ENCODE measurements at regions of chr13 and their contacts with region 1.

Region 1: DNA sequence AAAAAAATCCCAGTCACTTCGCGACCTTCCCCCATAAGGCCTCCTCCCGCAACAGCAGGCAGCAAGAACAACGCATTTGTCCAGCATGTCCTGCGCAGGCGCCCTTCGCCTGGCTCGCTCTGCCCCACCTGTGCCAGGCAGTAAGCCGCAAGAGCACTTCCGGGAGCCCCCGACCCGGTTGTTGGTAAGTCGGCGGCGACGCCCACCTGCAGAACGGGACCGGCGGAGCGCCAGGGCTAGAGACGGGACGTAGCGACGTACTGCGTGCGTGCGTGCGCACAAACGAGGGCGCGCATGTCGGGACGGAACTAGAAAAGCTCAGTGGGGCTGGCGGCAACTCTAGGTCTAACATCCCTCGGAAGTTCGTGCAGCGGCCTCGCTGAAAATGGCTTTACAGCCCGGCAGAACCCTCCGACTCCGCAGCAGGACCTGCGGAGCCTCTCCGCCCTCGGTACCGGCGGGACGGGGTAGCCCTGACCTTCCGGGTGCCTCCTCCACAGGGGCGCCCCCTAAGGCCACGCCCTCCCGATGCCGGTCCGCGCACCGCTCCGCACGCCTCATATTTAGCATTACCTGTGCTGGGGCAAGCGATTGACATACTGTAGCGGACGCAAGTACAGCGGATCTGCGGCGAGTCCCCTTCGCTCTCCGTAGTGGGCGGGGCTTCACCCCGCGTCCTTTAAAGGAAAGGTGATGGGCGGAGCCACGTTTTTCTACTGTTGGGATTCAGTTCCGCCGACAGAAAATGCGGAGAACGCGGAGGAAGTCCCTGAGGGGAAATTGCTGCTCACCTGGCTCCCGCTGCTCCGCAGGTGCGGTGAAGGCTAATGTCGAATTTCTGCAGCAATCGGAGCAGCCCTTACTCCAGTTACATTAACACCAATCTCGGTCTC is at the start of gene MTIF3:
- DNase-seq: peak; percentile 95 to 96
- ATAC-seq: peak; percentile 96
- H3K4me3 ChIP-seq: peak within 1 kb of the TSS; percentile 82 to 88
- H3K27ac ChIP-seq: peak within 1 kb of the TSS; percentile 33 to 88
- H3K4me1 ChIP-seq: peaks cover 0 to 3% of the 10 kb centered on the region in 2 donors
- H3K27me3 ChIP-seq: no peaks in the 10 kb centered on the region
- total RNA-seq, gene MTIF3: 26.8 to 43.8 TPM

Region 2: GRCh38 chr13:27374650-27375049 is 75.5 kb before region 1 on chr13:
- intact Hi-C with region 1: no loop called
- DNase-seq: peak; percentile 73 to 77
- ATAC-seq: peak; percentile 91
- H3K4me3 ChIP-seq: no peak overlapping the region
- H3K27ac ChIP-seq: no peak overlapping the region
- H3K4me1 ChIP-seq: no peaks in the 10 kb centered on the region
- H3K27me3 ChIP-seq: no peaks in the 10 kb centered on the region

Region 3: GRCh38 chr13:27424246-27425157 is 25.7 kb before region 1 on chr13 and contains the start of gene GTF3A:
- intact Hi-C with region 1: loop called in 1 of 2 experiments (anchors 2 kb)
- DNase-seq: peak; percentile 87 to 93
- ATAC-seq: peak; percentile 97
- H3K4me3 ChIP-seq: peak within 1 kb of the TSS; percentile 71 to 87
- H3K27ac ChIP-seq: peak within 1 kb of the TSS in 1 of 2 donors; percentile 55
- H3K4me1 ChIP-seq: peaks cover 2 to 3% of the 10 kb centered on the region in 2 donors
- H3K27me3 ChIP-seq: no peaks in the 10 kb centered on the region
- total RNA-seq, gene GTF3A: 62.1 to 68.5 TPM

Region 4: DNA sequence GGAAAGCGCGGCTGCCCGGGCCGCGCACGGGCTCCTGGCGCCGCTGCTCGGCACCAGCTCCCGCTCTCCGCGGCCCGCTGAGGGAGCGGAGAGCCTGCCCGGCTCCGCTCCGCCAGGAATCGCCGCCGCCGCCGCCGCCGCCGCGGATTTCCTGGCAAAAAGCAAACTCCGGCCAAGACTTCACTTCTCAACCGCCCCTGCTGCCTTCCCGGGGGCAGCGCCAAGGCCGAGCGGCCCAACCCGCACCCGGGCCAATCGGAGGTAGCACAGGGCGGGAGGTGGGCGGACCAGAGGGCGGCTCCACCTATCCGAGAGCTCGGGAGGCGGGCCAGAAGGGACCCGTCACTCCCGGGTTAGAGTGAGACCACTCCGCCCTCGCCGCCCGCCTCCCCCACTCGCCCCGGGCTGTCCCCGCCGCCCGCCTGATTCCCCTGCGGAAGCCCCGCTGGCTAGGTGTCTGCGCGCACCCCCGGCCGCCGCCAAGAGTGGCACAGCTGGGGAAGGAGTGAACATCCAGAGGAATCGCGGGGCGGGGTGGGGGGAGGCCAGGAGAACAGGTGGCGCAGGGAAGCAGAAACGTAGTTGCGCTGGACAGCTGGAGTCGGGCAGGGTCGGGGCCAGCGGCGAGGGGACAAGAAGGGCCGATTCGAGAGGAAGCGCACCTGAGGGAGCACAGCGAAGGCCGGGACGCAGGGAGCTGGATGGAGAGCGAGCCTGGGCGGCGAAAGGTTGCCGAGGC is 170.4 kb after region 1 on chr13 and contains the start of gene LNX2:
- intact Hi-C with region 1: loop called in 1 of 2 experiments (anchors 2 kb)
- DNase-seq: peak; percentile 99
- ATAC-seq: peak; percentile 98
- H3K4me3 ChIP-seq: peak within 1 kb of the TSS; percentile 82 to 99
- H3K27ac ChIP-seq: peak within 1 kb of the TSS; percentile 43 to 99
- H3K4me1 ChIP-seq: peaks cover 0 to 4% of the 10 kb centered on the region in 2 donors
- H3K27me3 ChIP-seq: no peaks in the 10 kb centered on the region
- total RNA-seq, gene LNX2: 9.5 to 10.3 TPM

Region 5: GRCh38 chr13:27638521-27638920 is 188.3 kb after region 1 on chr13:
- intact Hi-C with region 1: loop called in 1 of 2 experiments (anchors 10 kb)
- DNase-seq: no peak
- ATAC-seq: no peak
- H3K4me3 ChIP-seq: no peak overlapping the region
- H3K27ac ChIP-seq: peak overlapping the region in 1 of 2 donors; percentile 28
- H3K4me1 ChIP-seq: peaks cover 0 to 2% of the 10 kb centered on the region in 2 donors
- H3K27me3 ChIP-seq: no peaks in the 10 kb centered on the region

Region 6: DNA sequence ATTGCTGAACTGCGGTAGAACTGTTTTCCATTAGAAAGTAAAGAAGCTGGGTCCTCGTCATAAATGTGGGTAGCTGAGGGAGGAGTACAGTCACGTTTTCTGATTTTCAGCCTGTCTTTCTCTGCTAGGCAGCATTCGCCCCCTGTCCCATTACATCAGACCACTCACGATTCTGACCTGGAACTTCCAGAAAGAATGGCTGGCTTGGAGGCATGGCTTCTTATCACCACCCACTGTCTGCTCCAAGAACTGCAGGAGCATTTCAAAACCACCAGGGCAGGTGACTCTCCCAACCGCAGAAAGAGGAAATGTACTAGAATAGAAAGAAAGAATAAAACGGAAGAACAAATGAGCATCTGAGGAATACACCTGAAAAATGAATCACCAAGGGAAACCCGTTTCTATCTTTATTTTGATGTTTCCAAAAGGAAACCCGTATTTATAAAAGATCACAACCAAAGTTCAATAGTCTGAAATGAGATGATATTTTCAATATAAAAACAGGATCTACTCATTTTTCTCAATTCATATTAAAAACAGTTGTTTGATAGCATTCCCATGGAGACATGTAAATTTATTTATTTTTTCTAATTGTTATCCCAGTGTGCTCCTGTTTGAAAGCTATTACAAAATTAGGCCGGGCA is 1186.6 kb after region 1 on chr13:
- intact Hi-C with region 1: loop called in 1 of 2 experiments (anchors 10 kb)
- DNase-seq: no peak
- ATAC-seq: peak; percentile 77
- H3K4me3 ChIP-seq: no peak overlapping the region
- H3K27ac ChIP-seq: no peak overlapping the region
- H3K4me1 ChIP-seq: no peaks in the 10 kb centered on the region
- H3K27me3 ChIP-seq: no peaks in the 10 kb centered on the region

Measured in aorta (tissue), 5 donors.